ENCODE measurements at regions of chr7 and their contacts with region 1.

Region 1: DNA sequence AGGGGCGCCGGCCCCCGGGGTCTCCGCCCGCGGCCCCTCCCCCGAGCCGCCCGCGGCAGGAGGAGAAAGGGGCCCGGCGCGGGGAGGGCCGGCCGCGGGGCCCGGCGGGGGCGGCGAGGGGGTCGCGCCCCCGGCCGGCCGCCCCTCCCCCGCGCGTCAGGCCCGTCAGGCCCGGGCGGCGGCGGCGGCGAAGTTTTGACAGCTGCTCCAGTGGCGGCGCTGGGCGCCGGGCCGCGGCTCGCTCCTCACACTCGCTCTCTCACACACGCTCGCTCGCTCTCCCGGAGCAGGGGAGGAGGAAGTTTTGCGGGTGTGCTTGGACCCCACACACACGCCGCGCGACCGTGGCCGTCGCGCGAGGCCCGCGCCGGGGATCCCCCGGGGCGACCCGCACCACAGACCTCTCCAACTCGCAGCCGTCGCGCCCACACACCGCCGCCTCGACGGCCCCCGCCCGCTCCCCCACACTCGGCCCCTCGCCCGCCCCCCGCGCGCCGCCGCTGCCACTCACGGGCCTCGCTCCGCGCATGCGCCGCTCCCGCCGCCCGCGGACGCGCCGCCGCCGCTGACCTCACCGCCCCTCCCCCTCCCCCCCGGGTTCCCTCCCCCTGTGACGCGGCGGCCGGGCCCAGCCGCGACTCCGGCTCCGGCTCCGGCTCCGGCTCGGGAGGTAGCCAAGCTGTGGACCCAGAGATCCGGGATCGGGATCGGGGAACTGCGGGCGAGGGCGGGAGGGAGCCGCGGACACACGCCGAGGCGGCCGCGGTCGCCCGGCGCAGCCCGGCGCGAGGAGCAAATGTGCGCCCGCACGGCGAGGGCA is 518 bp upstream of the KMT2C start:
- DNase-seq: peak; percentile 82 to 97 (median 88)
- ATAC-seq: peak; percentile 66
- H3K4me3 ChIP-seq: peak overlapping the region; percentile 62
- H3K4me3 Mint-ChIP-seq: peak overlapping the region; percentile 91
- H3K27ac ChIP-seq: peak overlapping the region; percentile 86 to 92
- H3K27ac Mint-ChIP-seq: peak overlapping the region; percentile 93
- H3K4me1 ChIP-seq: peaks cover 5% of the 10 kb centered on the region
- H3K4me1 Mint-ChIP-seq: peaks cover 29% of the 10 kb centered on the region
- H3K27me3 ChIP-seq: no peaks in the 10 kb centered on the region
- H3K27me3 Mint-ChIP-seq: no peaks in the 10 kb centered on the region
- CTCF ChIP-seq: no peak

Region 2: DNA sequence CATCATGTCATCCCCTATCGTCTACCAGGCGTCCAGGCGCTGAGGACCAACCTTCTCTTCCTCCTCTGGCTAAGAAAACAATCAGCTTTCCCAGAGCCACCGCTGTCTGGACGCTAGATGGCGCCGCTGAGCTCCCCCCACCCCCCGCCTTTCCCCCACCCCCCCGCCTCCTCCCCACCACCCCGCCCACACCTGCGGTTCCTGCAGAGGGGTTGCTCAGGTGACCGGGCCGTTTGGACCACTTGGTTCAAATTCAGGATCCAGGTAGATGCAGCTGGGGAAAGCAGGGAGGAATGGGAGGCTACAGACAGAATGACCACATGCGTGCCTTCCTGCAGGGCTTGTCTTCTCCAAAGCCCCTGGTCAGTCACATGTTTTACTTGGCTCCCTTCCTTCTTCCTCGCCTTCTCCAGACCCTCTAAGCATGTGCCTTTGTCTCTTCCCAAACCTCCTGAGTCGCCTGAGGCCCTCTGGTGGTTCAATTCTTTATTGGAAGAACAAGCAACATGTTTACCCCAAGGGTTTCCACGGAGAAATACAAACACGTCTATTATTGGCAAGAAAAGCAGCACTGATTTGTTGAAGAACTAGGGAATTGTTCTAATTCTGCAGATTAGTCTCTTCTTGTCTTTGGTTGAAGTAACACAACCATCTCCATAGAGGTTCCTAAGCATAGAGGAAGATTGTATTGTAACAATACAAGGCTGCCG is 1559.3 kb before region 1 on chr7:
- CTCF ChIA-PET with region 1: no interaction called
- POLR2A ChIA-PET with region 1: no interaction called
- intact Hi-C with region 1: no loop called
- DNase-seq: peak; percentile 27 to 81 (median 42)
- ATAC-seq: peak; percentile 74
- H3K4me3 ChIP-seq: no peak overlapping the region
- H3K4me3 Mint-ChIP-seq: no peak overlapping the region
- H3K27ac ChIP-seq: no peak overlapping the region
- H3K27ac Mint-ChIP-seq: no peak overlapping the region
- H3K4me1 ChIP-seq: peaks cover 15% of the 10 kb centered on the region
- H3K4me1 Mint-ChIP-seq: peaks cover 24% of the 10 kb centered on the region
- H3K27me3 ChIP-seq: no peaks in the 10 kb centered on the region
- H3K27me3 Mint-ChIP-seq: peaks cover under 1% of the 10 kb centered on the region
- CTCF ChIP-seq: peak; percentile 42

Region 3: GRCh38 chr7:152347888-152348287 is 88.4 kb before region 1 on chr7:
- CTCF ChIA-PET with region 1: no interaction called
- POLR2A ChIA-PET with region 1: no interaction called
- intact Hi-C with region 1: loop called in 1 of 2 experiments (anchors 5 kb)
- DNase-seq: no peak
- ATAC-seq: no peak
- H3K4me3 ChIP-seq: no peak overlapping the region
- H3K4me3 Mint-ChIP-seq: no peak overlapping the region
- H3K27ac ChIP-seq: no peak overlapping the region
- H3K27ac Mint-ChIP-seq: no peak overlapping the region
- H3K4me1 ChIP-seq: peaks cover 10% of the 10 kb centered on the region
- H3K4me1 Mint-ChIP-seq: peaks cover 37% of the 10 kb centered on the region
- H3K27me3 ChIP-seq: no peaks in the 10 kb centered on the region
- H3K27me3 Mint-ChIP-seq: no peaks in the 10 kb centered on the region
- CTCF ChIP-seq: no peak

Region 4: GRCh38 chr7:152528612-152529011 is 92.3 kb after region 1 on chr7:
- CTCF ChIA-PET with region 1: no interaction called
- POLR2A ChIA-PET with region 1: no interaction called
- intact Hi-C with region 1: no loop called
- DNase-seq: no peak
- ATAC-seq: no peak
- H3K4me3 ChIP-seq: no peak overlapping the region
- H3K4me3 Mint-ChIP-seq: no peak overlapping the region
- H3K27ac ChIP-seq: no peak overlapping the region
- H3K27ac Mint-ChIP-seq: no peak overlapping the region
- H3K4me1 ChIP-seq: no peaks in the 10 kb centered on the region
- H3K4me1 Mint-ChIP-seq: no peaks in the 10 kb centered on the region
- H3K27me3 ChIP-seq: no peaks in the 10 kb centered on the region
- H3K27me3 Mint-ChIP-seq: no peaks in the 10 kb centered on the region
- CTCF ChIP-seq: no peak

Region 5: GRCh38 chr7:153247971-153248370 is 811.6 kb after region 1 on chr7:
- CTCF ChIA-PET with region 1: no interaction called
- POLR2A ChIA-PET with region 1: no interaction called
- intact Hi-C with region 1: no loop called
- DNase-seq: no peak
- ATAC-seq: no peak
- H3K4me3 ChIP-seq: no peak overlapping the region
- H3K4me3 Mint-ChIP-seq: no peak overlapping the region
- H3K27ac ChIP-seq: no peak overlapping the region
- H3K27ac Mint-ChIP-seq: no peak overlapping the region
- H3K4me1 ChIP-seq: no peaks in the 10 kb centered on the region
- H3K4me1 Mint-ChIP-seq: no peaks in the 10 kb centered on the region
- H3K27me3 ChIP-seq: no peaks in the 10 kb centered on the region
- H3K27me3 Mint-ChIP-seq: no peaks in the 10 kb centered on the region
- CTCF ChIP-seq: no peak